ENCODE measurements at regions of chr14 and their contacts with region 1.

Region 1: GRCh38 chr14:77067632-77068514 is 30.2 kb upstream of the CIPC start:
- DNase-seq: peak; percentile 62 to 85
- H3K4me3 ChIP-seq: no peak overlapping the region
- H3K27ac ChIP-seq: no peak overlapping the region
- H3K4me1 ChIP-seq: peaks cover 0 to 3% (median 1%) of the 10 kb centered on the region in 4 experiments; a peak in 4 of 7 replicates
- H3K27me3 ChIP-seq: no peaks in the 10 kb centered on the region
- CTCF ChIP-seq: peak; percentile 94 to 98 (median 95)
- EP300 ChIP-seq: no peak
- POLR2A ChIP-seq: no peak
- RAD21 ChIP-seq: peak; percentile 98 to 99

Region 2: DNA sequence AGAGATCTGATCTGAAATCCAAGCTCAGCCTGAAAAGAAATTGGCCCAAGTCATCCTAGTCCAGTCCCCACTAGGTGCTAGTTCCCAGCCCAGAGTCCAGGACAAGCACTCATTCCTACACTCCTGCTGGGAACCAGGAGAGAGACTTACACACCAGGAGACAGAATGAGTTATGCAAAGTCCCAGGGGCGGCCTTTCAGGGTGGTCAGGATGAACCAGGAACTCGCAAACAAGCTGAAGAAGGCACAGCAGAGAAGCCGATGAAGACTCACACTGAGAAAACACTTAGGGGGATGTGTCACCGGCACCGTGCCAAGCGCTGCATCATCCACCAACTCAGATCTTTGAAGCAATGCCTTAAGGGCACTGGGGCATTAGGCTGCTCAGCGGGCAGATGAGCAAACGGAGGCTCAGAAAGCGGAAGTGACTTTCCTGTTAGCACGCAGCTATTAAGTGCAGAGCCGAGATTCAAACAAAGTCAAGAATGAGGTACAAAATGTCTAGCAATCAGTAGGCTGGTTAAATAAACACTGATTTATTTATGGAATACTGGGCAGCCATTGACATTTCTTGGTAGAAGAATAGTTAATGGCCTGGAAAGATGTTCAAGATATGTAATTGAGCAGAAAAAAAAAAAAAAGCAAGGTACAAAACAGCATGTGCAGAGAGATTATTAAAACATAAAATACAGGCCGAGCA is 163.0 kb before region 1 on chr14:
- CTCF ChIA-PET with region 1: interaction called, 207 read pairs
- POLR2A ChIA-PET with region 1: no interaction called
- DNase-seq: no peak
- H3K4me3 ChIP-seq: no peak overlapping the region
- H3K27ac ChIP-seq: no peak overlapping the region
- H3K4me1 ChIP-seq: peaks cover 0 to 3% (median 1%) of the 10 kb centered on the region in 4 experiments; a peak in 1 of 7 replicates
- H3K27me3 ChIP-seq: no peaks in the 10 kb centered on the region
- CTCF ChIP-seq: no peak
- EP300 ChIP-seq: no peak
- POLR2A ChIP-seq: no peak
- RAD21 ChIP-seq: no peak

Region 3: DNA sequence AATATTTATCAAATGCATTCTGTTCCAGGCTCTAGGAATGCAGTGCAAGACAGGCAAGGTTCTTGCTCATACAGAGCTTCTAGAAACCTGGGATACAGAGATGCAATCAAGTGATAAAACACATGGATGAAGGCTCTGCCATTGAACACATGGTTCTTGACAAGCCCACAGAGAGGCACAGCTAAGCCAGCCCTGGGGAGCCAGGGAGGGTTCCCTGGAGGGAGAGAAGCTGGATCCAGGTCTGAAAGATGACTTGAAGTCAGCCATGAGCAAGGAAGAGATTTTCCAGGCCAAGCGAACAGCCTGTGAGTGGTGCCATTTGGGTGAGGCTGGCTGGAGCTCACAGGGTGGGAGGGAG is 105.6 kb before region 1 on chr14:
- CTCF ChIA-PET with region 1: interaction called, 10 read pairs
- POLR2A ChIA-PET with region 1: no interaction called
- DNase-seq: no peak
- H3K4me3 ChIP-seq: peak overlapping the region in 1 of 4 experiments; percentile 44; a peak in 2 of 8 replicates
- H3K27ac ChIP-seq: peak overlapping the region; percentile 55; the same call in 1 of the 2 replicates
- H3K4me1 ChIP-seq: peaks cover 27 to 37% (median 32%) of the 10 kb centered on the region in 4 experiments
- H3K27me3 ChIP-seq: no peaks in the 10 kb centered on the region
- CTCF ChIP-seq: no peak
- EP300 ChIP-seq: no peak
- POLR2A ChIP-seq: no peak
- RAD21 ChIP-seq: no peak

Region 4: GRCh38 chr14:77014004-77014604 is 53.8 kb before region 1 on chr14:
- CTCF ChIA-PET with region 1: interaction called, 12 read pairs
- POLR2A ChIA-PET with region 1: no interaction called
- DNase-seq: no peak
- H3K4me3 ChIP-seq: no peak overlapping the region
- H3K27ac ChIP-seq: no peak overlapping the region
- H3K4me1 ChIP-seq: peaks cover 0 to 12% (median 2%) of the 10 kb centered on the region in 4 experiments; a peak in 3 of 7 replicates
- H3K27me3 ChIP-seq: no peaks in the 10 kb centered on the region; a peak in 1 of 7 replicates
- CTCF ChIP-seq: no peak
- EP300 ChIP-seq: no peak
- POLR2A ChIP-seq: no peak
- RAD21 ChIP-seq: no peak

Region 5: GRCh38 chr14:77086017-77086736 is 18.3 kb after region 1 on chr14:
- CTCF ChIA-PET with region 1: interaction called, 603 read pairs
- POLR2A ChIA-PET with region 1: interaction called, 10 read pairs
- DNase-seq: no peak
- H3K4me3 ChIP-seq: no peak overlapping the region
- H3K27ac ChIP-seq: peak overlapping the region; percentile 54
- H3K4me1 ChIP-seq: peaks cover 10 to 30% (median 19%) of the 10 kb centered on the region in 4 experiments
- H3K27me3 ChIP-seq: no peaks in the 10 kb centered on the region
- CTCF ChIP-seq: no peak
- EP300 ChIP-seq: peak in 1 of 2 experiments; percentile 90; a peak in 2 of 3 replicates
- POLR2A ChIP-seq: no peak; a peak in 1 of 3 replicates
- RAD21 ChIP-seq: no peak

Region 6: DNA sequence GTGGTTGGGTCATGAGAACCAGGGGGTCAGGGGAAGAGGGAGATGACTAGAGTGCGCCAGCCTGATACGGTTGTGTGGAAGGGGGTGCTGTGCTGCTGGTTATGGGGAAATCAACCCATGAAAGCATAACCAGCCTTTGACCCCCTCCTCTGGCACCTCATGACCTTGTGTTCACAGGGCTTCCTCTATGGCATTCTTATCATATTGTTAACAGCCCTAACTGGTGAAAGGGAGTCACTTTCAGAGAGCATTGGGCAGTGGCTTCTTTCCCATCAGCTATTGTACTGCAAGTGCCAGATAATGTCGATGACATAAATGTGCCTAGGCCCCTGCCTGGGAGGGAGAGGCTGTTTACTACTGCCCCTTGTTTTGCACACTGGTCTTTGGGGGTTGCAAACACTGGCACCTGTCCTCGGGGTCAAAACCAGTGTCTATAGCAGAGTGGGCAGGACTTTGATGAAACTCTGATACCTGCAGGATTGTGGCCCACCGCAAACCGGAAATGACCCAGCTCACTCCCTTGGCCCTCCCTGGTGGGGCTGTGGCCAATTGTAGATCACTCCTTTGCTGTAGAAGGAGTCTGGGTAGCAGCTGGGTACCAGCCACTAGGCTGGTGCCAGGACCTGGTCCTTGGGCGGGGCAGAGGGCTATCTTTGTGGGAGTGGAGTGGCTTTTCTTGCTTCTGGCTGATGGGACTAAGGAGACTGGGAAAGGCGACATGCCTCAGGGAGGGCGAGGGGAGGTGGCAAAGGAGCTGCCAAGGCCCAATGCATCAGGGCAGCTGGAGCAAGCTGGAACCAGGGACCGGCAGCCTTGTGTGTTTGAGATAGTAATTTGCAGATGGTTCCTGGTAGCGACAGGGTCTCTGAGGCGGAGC is 113.1 kb after region 1 on chr14:
- CTCF ChIA-PET with region 1: no interaction called
- POLR2A ChIA-PET with region 1: no interaction called
- DNase-seq: no peak
- H3K4me3 ChIP-seq: peak overlapping the region in 2 of 4 experiments; percentile 11 to 69; a peak in 3 of 8 replicates
- H3K27ac ChIP-seq: no peak overlapping the region
- H3K4me1 ChIP-seq: peaks cover 3 to 11% (median 7%) of the 10 kb centered on the region in 4 experiments; a peak in 6 of 7 replicates
- H3K27me3 ChIP-seq: peaks cover 0 to 3% (median 1%) of the 10 kb centered on the region in 4 experiments; a peak in 3 of 7 replicates
- CTCF ChIP-seq: no peak; a peak in 1 of 4 replicates
- EP300 ChIP-seq: no peak
- POLR2A ChIP-seq: no peak
- RAD21 ChIP-seq: no peak

Measured in H1 (cell line).